Body of pancreas (tissue), 4 donors: ENCODE measurements at regions of chr10 and their contacts with region 1.

Region 1: GRCh38 chr10:80504158-80504811 is 33.4 kb upstream of the SH2D4B start:
- DNase-seq: peak in 1 of 4 donors; percentile 17
- ATAC-seq: no peak
- H3K4me3 ChIP-seq: no peak overlapping the region
- H3K27ac ChIP-seq: peak overlapping the region in 3 of 4 donors; percentile 59 to 72 (median 63)
- H3K4me1 ChIP-seq: peaks cover 61% of the 10 kb centered on the region
- H3K27me3 ChIP-seq: no peaks in the 10 kb centered on the region
- CTCF ChIP-seq: no peak
- POLR2A ChIP-seq: no peak

Region 2: DNA sequence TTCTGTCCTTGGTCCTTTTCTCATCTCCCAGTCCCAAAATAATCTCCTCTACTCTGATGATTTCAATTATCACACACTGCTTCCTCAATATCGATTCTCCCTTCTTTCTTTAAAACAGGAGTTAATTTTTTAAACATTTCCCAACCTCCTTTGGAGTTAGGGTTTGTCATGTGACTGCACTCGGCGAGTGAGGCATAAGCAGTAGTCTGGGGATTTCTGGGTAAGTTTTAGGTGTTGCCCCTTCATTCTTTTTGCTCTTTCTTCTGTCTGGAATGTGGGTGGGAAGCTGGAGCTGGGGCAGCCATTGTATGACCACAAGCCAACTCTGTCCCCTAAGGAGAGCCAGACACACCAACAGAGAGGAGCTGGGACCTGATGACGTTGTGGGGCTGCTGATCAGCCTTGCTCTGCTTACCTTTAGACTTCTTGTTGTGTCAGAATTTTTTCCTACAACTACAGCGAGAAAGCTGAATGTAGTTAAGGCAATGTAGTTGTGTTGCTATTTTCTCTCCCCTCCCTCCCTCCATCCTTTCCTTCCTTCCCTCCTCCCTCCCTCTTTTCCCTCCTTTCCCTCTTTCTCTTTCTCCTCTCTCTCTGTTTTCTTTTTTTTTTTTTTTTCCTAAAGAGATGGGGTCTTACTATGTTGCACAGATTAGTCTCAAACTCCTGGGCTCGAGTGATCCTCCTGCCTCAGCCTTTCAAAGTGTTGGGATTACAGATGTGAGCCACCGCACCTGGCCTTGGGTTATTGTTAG is 56.7 kb before region 1 on chr10:
- intact Hi-C with region 1: loop called (anchors 2 kb)
- DNase-seq: no peak
- ATAC-seq: no peak
- H3K4me3 ChIP-seq: no peak overlapping the region
- H3K27ac ChIP-seq: no peak overlapping the region
- H3K4me1 ChIP-seq: no peaks in the 10 kb centered on the region
- H3K27me3 ChIP-seq: no peaks in the 10 kb centered on the region
- CTCF ChIP-seq: no peak
- POLR2A ChIP-seq: no peak